ENCODE measurements at regions of chr12 and their contacts with region 1.

Region 1: DNA sequence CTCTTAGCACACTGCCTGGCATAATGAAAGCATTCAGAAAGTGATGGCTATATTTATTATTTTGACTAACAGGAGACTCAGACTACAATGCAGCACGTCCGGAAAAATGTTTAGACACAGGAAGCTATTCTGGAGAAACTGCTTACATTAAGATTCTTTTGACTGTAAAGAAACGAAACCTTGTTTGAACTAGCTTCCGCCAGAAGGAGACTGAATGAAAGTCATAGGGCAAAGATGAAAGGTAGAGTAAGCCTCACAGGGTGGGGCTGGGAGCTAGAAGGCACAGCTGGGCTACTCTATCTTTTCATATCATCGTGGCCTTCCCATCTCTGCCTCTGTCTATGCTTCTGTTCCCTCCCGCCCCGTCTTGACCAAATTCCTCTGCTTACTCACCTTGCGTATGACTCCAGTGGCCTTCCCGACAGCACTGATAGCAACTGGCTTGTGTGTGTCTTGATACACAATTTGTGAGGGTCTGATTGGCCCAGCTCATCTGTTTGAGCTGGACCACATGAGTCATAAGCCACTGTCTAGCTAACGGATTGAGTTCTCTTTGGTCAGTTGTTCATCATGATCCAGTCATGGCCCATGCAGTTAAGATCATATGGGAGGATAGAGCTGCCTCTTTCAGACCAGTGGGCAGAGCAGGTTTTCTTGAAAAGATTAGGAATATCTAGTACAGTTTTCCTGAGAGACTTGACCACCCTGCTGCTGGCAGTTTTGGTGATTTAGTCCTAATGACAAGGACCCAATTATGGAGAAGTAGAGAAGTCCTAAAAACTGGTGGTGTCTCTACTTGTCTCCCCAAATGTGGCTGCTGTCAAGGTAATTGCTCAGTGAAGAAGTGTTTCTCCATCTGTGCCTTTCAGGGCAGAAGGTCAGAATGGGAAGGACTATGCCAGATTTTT is 151.5 kb upstream of the SLC38A2 start:
- DNase-seq: peak; percentile 52 to 65 (median 56)
- H3K4me3 ChIP-seq: peak overlapping the region in 1 of 2 donors; percentile 21
- H3K4me3 Mint-ChIP-seq: peak overlapping the region; percentile 64 to 79 (median 78)
- H3K27ac ChIP-seq: peak overlapping the region; percentile 51
- H3K27ac Mint-ChIP-seq: peak overlapping the region; percentile 66 to 95 (median 94)
- H3K4me1 ChIP-seq: peaks cover 18% of the 10 kb centered on the region
- H3K4me1 Mint-ChIP-seq: peaks cover 17 to 32% (median 25%) of the 10 kb centered on the region in 4 donors
- H3K27me3 ChIP-seq: no peaks in the 10 kb centered on the region
- H3K27me3 Mint-ChIP-seq: no peaks in the 10 kb centered on the region

Region 2: DNA sequence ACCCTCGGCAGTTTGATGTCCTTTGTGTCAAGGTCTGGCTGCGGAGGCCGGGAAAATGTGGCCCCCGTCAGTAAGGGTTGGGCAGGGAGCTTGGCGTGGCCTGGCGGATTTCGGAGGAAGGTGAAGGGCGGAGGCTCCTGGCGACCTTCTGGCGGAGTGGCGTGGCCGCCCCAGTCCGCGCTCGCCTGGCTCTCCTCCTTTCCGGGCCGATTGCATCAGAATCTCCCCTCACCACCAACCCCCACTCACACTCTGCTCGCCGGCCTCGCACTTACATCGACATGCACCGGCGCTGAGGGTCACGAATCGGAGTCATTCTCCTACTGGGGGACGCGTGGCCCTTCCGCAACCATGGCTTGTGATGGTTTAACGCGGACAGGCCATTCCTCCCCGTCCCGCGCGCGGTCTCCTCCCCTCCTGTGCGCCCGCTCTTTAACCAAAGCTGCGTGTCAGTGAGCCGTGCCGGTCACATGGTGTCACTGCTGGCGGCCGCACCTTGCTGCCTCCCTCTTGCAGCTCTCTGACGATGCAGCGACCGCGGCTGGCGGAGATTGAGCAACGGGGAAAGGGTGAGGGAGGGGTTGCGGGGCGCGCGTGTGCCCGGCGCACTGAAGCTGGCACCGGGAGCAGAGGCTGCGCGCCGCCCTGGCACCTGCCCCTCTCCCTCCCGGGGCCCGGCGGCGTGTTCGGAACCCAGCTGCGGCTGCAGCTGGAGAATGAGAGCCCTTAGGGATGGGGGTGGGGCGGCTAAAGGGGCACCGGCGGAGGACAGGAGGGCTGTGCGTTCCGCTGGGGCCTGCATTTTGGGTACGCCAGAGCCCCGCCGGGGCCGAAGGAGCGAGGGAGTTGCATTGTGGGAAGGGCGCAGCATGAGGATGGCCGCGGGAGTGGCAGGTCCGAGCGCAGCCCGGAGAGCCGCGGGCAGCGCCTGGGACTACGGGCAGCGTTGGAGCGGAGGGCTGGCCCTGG is 255.2 kb before region 1 on chr12 and contains the start of gene SLC38A1:
- CTCF ChIA-PET with region 1: no interaction called
- POLR2A ChIA-PET with region 1: no interaction called
- intact Hi-C with region 1: no loop called
- DNase-seq: peak; percentile 88 to 96 (median 89)
- H3K4me3 ChIP-seq: peak within 1 kb of the TSS; percentile 91 to 96
- H3K4me3 Mint-ChIP-seq: no peak within 1 kb of the TSS
- H3K27ac ChIP-seq: peak within 1 kb of the TSS; percentile 95
- H3K27ac Mint-ChIP-seq: no peak within 1 kb of the TSS
- H3K4me1 ChIP-seq: peaks cover 54% of the 10 kb centered on the region
- H3K4me1 Mint-ChIP-seq: peaks cover 16 to 47% (median 23%) of the 10 kb centered on the region in 4 donors
- H3K27me3 ChIP-seq: no peaks in the 10 kb centered on the region
- H3K27me3 Mint-ChIP-seq: no peaks in the 10 kb centered on the region
- total RNA-seq, gene SLC38A1: 265 to 272 TPM

Region 3: DNA sequence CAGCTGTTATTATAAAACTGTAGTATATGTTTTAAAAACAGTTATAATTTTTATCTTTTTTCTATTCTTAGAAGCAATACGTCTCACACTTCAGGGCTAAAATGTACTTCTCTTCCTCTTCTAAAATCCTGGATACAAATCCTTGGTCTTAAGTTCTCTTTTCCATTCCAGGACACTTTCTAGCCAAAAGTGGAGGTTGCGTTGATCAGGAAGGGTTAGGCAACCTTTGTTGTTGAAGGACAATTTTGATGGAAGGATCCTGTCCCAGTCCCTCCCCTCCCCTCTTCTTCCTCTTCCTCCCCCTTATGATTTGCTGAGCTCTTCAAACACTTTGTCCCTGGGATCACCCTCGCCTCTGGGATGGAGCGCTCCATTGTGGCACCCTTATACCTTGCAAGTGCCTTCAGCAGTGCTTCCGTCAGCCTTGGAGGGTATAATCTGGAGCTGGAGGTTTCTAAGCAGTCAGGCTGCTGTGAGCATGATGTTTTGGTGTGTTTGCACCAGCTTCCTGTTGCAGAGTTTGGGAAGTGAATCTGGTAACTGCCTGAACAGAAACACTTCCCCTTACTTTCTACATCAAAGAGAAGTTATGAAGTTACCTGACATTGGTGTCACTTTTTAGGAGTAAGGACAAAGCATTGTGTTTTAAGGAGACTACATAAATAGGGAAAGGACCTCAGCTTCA is 64.1 kb before region 1 on chr12:
- CTCF ChIA-PET with region 1: no interaction called
- POLR2A ChIA-PET with region 1: interaction called, 11 read pairs
- intact Hi-C with region 1: no loop called
- DNase-seq: no peak
- H3K4me3 ChIP-seq: no peak overlapping the region
- H3K4me3 Mint-ChIP-seq: peak overlapping the region in 7 of 8 donors; percentile 78 to 92 (median 80)
- H3K27ac ChIP-seq: no peak overlapping the region
- H3K27ac Mint-ChIP-seq: peak overlapping the region; percentile 82 to 97 (median 94)
- H3K4me1 ChIP-seq: peaks cover 56% of the 10 kb centered on the region
- H3K4me1 Mint-ChIP-seq: peaks cover 43 to 63% (median 54%) of the 10 kb centered on the region in 4 donors
- H3K27me3 ChIP-seq: no peaks in the 10 kb centered on the region
- H3K27me3 Mint-ChIP-seq: no peaks in the 10 kb centered on the region

Region 4: GRCh38 chr12:46470036-46470627 is 54.0 kb before region 1 on chr12:
- CTCF ChIA-PET with region 1: no interaction called
- POLR2A ChIA-PET with region 1: no interaction called
- intact Hi-C with region 1: no loop called
- DNase-seq: peak in 3 of 5 donors; percentile 14 to 22 (median 19)
- H3K4me3 ChIP-seq: no peak overlapping the region
- H3K4me3 Mint-ChIP-seq: peak overlapping the region in 7 of 8 donors; percentile 32 to 55 (median 42)
- H3K27ac ChIP-seq: no peak overlapping the region
- H3K27ac Mint-ChIP-seq: peak overlapping the region in 6 of 7 donors; percentile 11 to 84 (median 55)
- H3K4me1 ChIP-seq: peaks cover 9% of the 10 kb centered on the region
- H3K4me1 Mint-ChIP-seq: peaks cover 9 to 15% (median 11%) of the 10 kb centered on the region in 4 donors
- H3K27me3 ChIP-seq: no peaks in the 10 kb centered on the region
- H3K27me3 Mint-ChIP-seq: no peaks in the 10 kb centered on the region

Region 5: DNA sequence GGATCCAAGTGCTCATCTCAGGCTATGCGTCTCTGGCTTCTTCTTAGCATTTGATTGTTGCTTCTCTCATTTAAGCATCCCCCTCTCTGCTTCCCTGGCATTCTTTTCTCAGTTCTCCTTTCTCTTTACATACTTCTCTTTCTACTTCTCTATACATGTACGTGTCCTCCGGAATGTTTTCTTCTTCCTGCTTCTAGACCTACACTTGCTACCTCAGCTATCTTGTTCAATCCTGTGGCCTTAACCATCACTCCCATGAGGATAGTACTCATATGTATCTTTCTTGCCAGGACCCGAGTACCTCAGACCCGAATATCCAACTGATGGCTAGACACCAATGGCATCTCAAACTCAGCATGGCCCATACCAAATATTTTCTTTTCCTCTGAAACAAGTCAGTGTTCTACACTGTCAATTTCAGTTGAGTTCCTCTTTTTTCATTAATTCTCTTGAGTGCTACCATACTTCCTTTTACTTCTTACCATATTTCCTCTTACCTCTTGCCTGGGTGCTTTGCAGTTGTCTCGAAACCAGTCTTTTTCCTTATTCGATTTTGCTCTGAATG is 36.5 kb before region 1 on chr12:
- CTCF ChIA-PET with region 1: no interaction called
- POLR2A ChIA-PET with region 1: no interaction called
- intact Hi-C with region 1: no loop called
- DNase-seq: no peak
- H3K4me3 ChIP-seq: no peak overlapping the region
- H3K4me3 Mint-ChIP-seq: no peak overlapping the region
- H3K27ac ChIP-seq: no peak overlapping the region
- H3K27ac Mint-ChIP-seq: no peak overlapping the region
- H3K4me1 ChIP-seq: no peaks in the 10 kb centered on the region
- H3K4me1 Mint-ChIP-seq: peaks cover 0 to 1% (median 0%) of the 10 kb centered on the region in 4 donors
- H3K27me3 ChIP-seq: no peaks in the 10 kb centered on the region
- H3K27me3 Mint-ChIP-seq: no peaks in the 10 kb centered on the region

Region 6: GRCh38 chr12:46546634-46547286 is 22.6 kb after region 1 on chr12:
- CTCF ChIA-PET with region 1: no interaction called
- POLR2A ChIA-PET with region 1: interaction called, 10 read pairs
- intact Hi-C with region 1: no loop called
- DNase-seq: peak in 3 of 5 donors; percentile 5 to 12 (median 7)
- H3K4me3 ChIP-seq: no peak overlapping the region
- H3K4me3 Mint-ChIP-seq: peak overlapping the region in 5 of 8 donors; percentile 40 to 71 (median 60)
- H3K27ac ChIP-seq: no peak overlapping the region
- H3K27ac Mint-ChIP-seq: peak overlapping the region in 5 of 7 donors; percentile 20 to 76 (median 38)
- H3K4me1 ChIP-seq: peaks cover 30% of the 10 kb centered on the region
- H3K4me1 Mint-ChIP-seq: peaks cover 35 to 51% (median 42%) of the 10 kb centered on the region in 4 donors
- H3K27me3 ChIP-seq: no peaks in the 10 kb centered on the region
- H3K27me3 Mint-ChIP-seq: no peaks in the 10 kb centered on the region

Region 7: GRCh38 chr12:46585854-46586621 is 61.9 kb after region 1 on chr12:
- CTCF ChIA-PET with region 1: no interaction called
- POLR2A ChIA-PET with region 1: interaction called, 13 read pairs
- intact Hi-C with region 1: no loop called
- DNase-seq: peak; percentile 54 to 71 (median 62)
- H3K4me3 ChIP-seq: peak overlapping the region in 1 of 2 donors; percentile 16
- H3K4me3 Mint-ChIP-seq: peak overlapping the region; percentile 53 to 78 (median 71)
- H3K27ac ChIP-seq: no peak overlapping the region
- H3K27ac Mint-ChIP-seq: peak overlapping the region; percentile 65 to 93 (median 83)
- H3K4me1 ChIP-seq: peaks cover 21% of the 10 kb centered on the region
- H3K4me1 Mint-ChIP-seq: peaks cover 51 to 73% (median 63%) of the 10 kb centered on the region in 4 donors
- H3K27me3 ChIP-seq: no peaks in the 10 kb centered on the region
- H3K27me3 Mint-ChIP-seq: no peaks in the 10 kb centered on the region

Region 8: GRCh38 chr12:46608431-46609272 is 84.5 kb after region 1 on chr12:
- CTCF ChIA-PET with region 1: no interaction called
- POLR2A ChIA-PET with region 1: interaction called, 13 read pairs
- intact Hi-C with region 1: no loop called
- DNase-seq: no peak
- H3K4me3 ChIP-seq: no peak overlapping the region
- H3K4me3 Mint-ChIP-seq: peak overlapping the region in 7 of 8 donors; percentile 57 to 78 (median 73)
- H3K27ac ChIP-seq: no peak overlapping the region
- H3K27ac Mint-ChIP-seq: peak overlapping the region; percentile 6 to 84 (median 58)
- H3K4me1 ChIP-seq: peaks cover 29% of the 10 kb centered on the region
- H3K4me1 Mint-ChIP-seq: peaks cover 33 to 65% (median 47%) of the 10 kb centered on the region in 4 donors
- H3K27me3 ChIP-seq: no peaks in the 10 kb centered on the region
- H3K27me3 Mint-ChIP-seq: no peaks in the 10 kb centered on the region

Region 9: DNA sequence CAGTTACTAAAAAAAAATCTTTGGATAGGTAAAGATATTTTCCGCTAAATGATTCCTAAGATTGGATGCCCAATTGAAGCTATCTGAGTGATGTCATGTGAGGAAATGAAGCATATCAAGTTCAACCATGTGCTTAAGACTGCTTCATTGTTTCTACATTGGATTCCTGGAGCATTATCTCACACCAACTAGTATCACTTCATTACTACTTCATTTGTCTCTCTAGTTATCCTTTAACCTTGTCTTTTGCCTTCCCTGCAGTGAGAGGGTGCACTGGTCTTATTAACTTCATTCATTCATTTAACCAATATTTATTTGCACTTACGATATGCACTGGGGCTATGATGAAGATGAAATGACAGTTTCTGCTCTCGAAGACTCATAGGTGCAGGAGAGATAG is 103.6 kb after region 1 on chr12:
- CTCF ChIA-PET with region 1: no interaction called
- POLR2A ChIA-PET with region 1: no interaction called
- intact Hi-C with region 1: no loop called
- DNase-seq: no peak
- H3K4me3 ChIP-seq: no peak overlapping the region
- H3K4me3 Mint-ChIP-seq: no peak overlapping the region
- H3K27ac ChIP-seq: no peak overlapping the region
- H3K27ac Mint-ChIP-seq: no peak overlapping the region
- H3K4me1 ChIP-seq: no peaks in the 10 kb centered on the region
- H3K4me1 Mint-ChIP-seq: peaks cover 0 to 9% (median 4%) of the 10 kb centered on the region in 4 donors
- H3K27me3 ChIP-seq: no peaks in the 10 kb centered on the region
- H3K27me3 Mint-ChIP-seq: peaks cover 0 to 2% of the 10 kb centered on the region in 2 donors